HEK293 (cell line): ENCODE measurements at regions of chr7 and their contacts with region 1.

Region 1: GRCh38 chr7:104923010-104923421 is 91.0 kb upstream of the KMT2E start:
- H3K4me3 ChIP-seq: no peak overlapping the region
- H3K27ac ChIP-seq: peak overlapping the region; percentile 27; the same call in 1 of the 2 replicates
- H3K4me1 ChIP-seq: no peaks in the 10 kb centered on the region
- CTCF ChIP-seq: peak; percentile 92

Region 2: DNA sequence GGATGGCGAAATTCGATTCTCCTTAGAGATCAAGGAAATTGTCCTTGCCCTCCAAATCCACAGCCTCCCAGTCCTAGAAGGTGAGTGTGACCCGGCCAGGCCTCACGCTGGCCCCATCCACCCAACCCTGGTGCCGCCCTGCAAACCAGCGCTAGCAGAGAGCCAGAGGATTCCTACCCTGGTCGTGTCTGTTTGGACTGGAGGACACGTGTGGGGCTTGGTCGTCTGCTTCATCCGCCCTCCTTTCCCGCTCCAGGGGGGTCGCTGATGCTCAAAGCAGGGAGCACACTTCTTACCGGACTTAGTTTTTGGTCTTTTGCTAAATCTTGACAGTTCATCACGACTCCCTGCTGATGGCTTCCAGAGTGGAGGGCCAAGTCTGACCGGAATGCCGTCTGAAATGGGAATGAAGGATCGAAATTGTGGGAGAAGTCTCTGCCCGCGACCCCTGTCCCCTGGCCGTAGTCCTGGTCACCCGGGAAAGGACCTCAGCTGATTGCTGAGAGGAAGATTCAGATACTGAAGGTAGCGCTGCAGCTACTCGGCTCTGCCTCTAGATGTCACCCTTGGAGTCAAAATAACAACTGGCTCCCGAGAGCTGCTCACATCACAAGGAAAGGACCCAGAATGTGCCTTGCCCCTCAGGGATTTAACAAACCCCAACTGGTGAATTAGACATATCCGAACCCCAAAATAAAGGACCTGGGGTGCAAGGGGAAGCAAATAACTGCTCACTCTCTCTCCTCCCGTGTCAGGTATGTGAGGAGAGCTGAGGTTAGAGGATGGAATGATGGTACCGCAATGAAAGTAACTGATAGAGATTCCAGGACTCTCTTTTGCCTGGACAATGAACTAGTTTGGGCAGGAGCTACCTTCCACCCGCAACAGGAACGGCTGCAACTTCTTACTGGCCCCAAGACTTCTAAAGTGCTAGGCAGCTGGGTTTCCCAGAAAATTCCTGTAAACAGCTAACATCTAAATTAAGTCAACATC is 691.7 kb before region 1 on chr7:
- CTCF ChIA-PET with region 1: interaction called, 20 read pairs
- POLR2A ChIA-PET with region 1: no interaction called
- H3K4me3 ChIP-seq: no peak overlapping the region
- H3K27ac ChIP-seq: no peak overlapping the region
- H3K4me1 ChIP-seq: no peaks in the 10 kb centered on the region
- CTCF ChIP-seq: peak; percentile 50; the same call in 1 of the 2 replicates

Region 3: DNA sequence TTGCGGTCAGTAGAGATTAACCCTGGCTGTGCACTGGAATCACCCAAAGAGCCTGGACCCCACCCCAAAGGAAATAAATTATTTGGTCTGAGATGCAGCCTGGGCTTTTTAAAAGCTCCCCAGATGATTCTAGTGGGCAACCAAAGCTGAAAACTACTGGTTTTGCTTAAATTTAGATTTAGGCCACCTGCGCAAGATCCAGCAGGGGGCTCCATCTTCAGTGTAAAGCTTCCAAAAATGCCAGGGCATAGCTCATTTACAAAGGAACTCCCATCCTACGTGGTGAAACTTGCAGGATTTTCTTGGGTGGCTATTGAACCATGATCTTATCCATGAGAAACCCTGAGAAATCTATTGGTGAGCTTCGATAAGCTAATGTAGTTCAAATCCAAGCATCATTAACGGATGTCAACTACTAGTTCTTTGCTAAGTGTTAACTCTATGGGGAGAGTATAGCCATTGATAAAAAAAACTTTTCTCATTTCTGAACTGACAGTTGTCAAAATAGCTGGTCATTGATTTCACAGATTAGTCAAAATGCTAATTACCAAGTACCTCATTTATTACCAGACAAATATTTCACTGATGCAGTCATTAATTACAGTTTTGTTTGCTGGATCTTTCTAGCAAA is 279.3 kb before region 1 on chr7:
- CTCF ChIA-PET with region 1: interaction called, 26 read pairs
- POLR2A ChIA-PET with region 1: interaction called, 3 read pairs
- H3K4me3 ChIP-seq: no peak overlapping the region
- H3K27ac ChIP-seq: no peak overlapping the region
- H3K4me1 ChIP-seq: no peaks in the 10 kb centered on the region
- CTCF ChIP-seq: no peak

Region 4: GRCh38 chr7:104908636-104909035 is 14.4 kb before region 1 on chr7:
- CTCF ChIA-PET with region 1: interaction called, 24 read pairs
- POLR2A ChIA-PET with region 1: no interaction called
- H3K4me3 ChIP-seq: no peak overlapping the region
- H3K27ac ChIP-seq: no peak overlapping the region
- H3K4me1 ChIP-seq: no peaks in the 10 kb centered on the region
- CTCF ChIP-seq: no peak

Region 5: DNA sequence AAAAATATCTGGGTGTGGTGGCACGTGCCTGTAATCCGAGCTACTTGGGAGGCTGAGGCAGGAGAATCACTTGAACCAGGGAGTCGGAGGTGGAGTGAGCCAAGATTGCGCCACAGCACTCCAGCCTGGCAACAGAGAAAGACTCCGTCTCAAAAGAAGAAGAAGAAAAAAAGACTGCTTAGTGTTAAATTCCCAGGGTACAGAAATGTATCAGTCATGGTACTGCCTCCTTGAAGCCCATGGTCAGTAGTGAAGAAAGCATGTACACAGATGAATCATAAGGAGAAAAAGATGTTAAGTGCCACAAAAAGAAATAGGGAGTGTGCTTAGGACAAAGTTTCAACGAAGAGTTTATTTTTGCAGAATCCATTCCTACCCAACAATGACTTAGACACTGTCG is 28.5 kb after region 1 on chr7:
- CTCF ChIA-PET with region 1: no interaction called
- POLR2A ChIA-PET with region 1: no interaction called
- H3K4me3 ChIP-seq: no peak overlapping the region
- H3K27ac ChIP-seq: no peak overlapping the region
- H3K4me1 ChIP-seq: no peaks in the 10 kb centered on the region; the same call in 1 of the 2 replicates
- CTCF ChIP-seq: no peak

Region 6: GRCh38 chr7:105028004-105028403 is 105.0 kb after region 1 on chr7:
- CTCF ChIA-PET with region 1: no interaction called
- POLR2A ChIA-PET with region 1: no interaction called
- H3K4me3 ChIP-seq: no peak overlapping the region
- H3K27ac ChIP-seq: no peak overlapping the region
- H3K4me1 ChIP-seq: peaks cover 31% of the 10 kb centered on the region
- CTCF ChIP-seq: no peak

Region 7: DNA sequence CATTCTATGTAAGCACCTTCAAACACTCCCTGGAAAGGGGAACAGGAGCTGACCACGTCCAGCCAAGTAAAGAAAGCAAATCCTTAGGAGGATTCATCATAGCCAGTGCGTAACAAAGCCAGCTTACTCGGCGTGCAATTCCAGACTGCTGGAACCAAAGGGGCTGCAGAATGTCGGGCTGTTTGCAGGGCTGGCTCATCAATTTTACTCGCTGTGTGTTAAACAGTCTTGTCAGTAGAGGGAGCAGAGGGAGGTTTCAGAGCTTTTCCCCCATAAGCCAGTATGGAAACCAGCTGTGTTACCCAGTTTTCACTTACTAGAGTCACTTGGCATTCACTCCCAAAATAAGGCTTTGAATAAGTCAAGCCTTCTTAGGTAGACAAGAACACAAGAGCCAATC is 218.1 kb after region 1 on chr7:
- CTCF ChIA-PET with region 1: no interaction called
- POLR2A ChIA-PET with region 1: no interaction called
- H3K4me3 ChIP-seq: no peak overlapping the region
- H3K27ac ChIP-seq: no peak overlapping the region
- H3K4me1 ChIP-seq: no peaks in the 10 kb centered on the region
- CTCF ChIP-seq: no peak

Region 8: GRCh38 chr7:105589356-105590077 is 666.5 kb after region 1 on chr7:
- CTCF ChIA-PET with region 1: interaction called, 11 read pairs
- POLR2A ChIA-PET with region 1: no interaction called
- H3K4me3 ChIP-seq: no peak overlapping the region
- H3K27ac ChIP-seq: no peak overlapping the region
- H3K4me1 ChIP-seq: no peaks in the 10 kb centered on the region
- CTCF ChIP-seq: peak; percentile 83